Panc1 (cell line): ENCODE measurements at regions of chr1 and their contacts with region 1.

Region 1: DNA sequence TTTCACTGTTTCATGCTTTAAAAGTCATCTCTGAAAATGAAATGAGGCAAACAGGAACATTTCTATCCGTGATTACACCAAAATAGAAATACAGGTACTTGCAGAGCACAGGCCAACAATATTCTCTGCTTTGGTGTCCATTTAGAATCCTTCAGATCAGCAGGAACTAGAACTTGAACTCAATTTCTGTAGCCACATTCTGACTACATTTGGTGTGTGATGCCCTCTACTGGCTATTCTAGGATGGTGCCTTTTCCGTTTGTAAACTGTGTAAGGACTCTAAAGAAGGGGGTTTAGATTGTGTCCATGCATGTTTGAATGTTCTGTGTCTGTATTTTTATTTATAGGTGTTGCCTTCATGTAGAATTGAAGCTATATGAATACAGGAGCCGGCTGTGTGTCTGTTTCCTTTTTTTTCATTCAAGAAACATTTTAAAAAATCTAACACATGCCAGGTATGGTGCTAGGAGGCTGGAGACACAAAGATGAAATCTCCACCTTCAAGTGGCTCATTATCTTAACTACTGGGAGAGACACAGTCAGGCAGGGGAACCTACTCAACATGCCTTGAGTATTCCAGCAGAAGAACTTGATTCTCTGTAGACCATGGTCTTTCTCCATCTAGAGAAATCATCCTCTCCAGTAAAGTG is 7.6 kb upstream of the ZNF326 start:
- DNase-seq: peak; percentile 78
- ATAC-seq: peak; percentile 95
- H3K4me3 ChIP-seq: no peak overlapping the region
- H3K27ac ChIP-seq: no peak overlapping the region
- H3K4me1 ChIP-seq: no peaks in the 10 kb centered on the region
- H3K27me3 ChIP-seq: no peaks in the 10 kb centered on the region
- CTCF ChIP-seq: peak; percentile 83

Region 2: DNA sequence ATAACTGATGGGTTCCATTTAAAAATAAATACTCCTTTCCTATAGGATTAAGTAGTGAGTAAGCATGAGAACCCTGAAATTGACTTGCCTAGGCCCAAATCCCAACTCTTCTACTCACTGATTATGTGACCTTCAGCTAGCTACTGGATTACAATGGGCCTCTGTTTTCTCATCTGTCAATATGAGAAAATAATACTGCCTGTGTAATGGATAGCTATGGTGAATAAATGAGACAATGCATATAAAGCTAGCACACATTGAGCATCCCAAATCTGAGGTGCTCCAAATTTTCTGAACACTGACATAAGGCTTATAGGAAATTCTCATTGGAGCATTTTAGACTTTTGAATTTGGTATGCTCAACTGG is 359.7 kb before region 1 on chr1:
- CTCF ChIA-PET with region 1: no interaction called
- POLR2A ChIA-PET with region 1: no interaction called
- in situ Hi-C with region 1: no loop called
- intact Hi-C with region 1: loop called (anchors 5 kb)
- DNase-seq: no peak
- ATAC-seq: no peak
- H3K4me3 ChIP-seq: no peak overlapping the region
- H3K27ac ChIP-seq: no peak overlapping the region
- H3K4me1 ChIP-seq: peaks cover 3% of the 10 kb centered on the region; the same call in 1 of the 2 replicates
- H3K27me3 ChIP-seq: no peaks in the 10 kb centered on the region
- CTCF ChIP-seq: no peak

Region 3: DNA sequence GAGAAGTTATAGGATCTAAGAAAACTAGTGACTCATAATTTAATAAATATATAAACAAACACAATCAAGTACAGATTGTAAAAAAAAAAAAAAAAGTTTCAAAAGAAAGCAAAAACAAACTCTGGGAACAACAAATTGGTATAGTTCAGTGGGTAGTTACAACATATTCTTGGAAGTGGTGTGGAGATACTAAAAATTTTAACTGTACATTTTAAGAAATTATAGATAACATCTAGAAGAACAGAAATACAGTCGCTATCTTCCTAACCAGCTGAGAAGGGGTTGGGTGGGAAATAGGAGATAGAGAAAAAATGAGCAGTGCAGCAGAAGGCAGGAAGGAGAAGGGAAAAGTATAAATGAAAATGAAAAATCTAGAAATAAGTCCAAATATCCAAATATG is 283.8 kb before region 1 on chr1:
- CTCF ChIA-PET with region 1: interaction called, 10 read pairs
- POLR2A ChIA-PET with region 1: no interaction called
- in situ Hi-C with region 1: no loop called
- intact Hi-C with region 1: no loop called
- DNase-seq: no peak
- ATAC-seq: no peak
- H3K4me3 ChIP-seq: no peak overlapping the region
- H3K27ac ChIP-seq: no peak overlapping the region
- H3K4me1 ChIP-seq: no peaks in the 10 kb centered on the region; the same call in 1 of the 2 replicates
- H3K27me3 ChIP-seq: no peaks in the 10 kb centered on the region
- CTCF ChIP-seq: no peak

Region 4: DNA sequence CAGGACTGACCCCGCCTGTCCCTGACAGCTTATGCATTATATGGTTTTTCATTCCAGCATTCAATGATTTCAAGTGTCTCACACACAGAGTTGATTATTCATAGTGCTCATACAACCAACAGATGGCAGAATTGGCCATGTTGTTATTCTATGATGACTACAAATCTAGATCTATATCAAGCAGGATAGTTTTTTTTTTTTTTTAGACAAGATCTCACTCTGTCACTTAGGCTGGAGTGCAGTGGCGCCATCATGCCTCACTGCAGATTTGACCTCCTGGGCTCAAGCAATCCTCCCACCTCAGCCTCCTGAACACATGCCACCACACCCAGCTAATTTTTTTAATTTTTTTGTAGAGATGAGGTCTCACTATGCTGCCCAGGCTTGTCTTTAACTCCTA is 206.6 kb before region 1 on chr1:
- CTCF ChIA-PET with region 1: no interaction called
- POLR2A ChIA-PET with region 1: no interaction called
- in situ Hi-C with region 1: no loop called
- intact Hi-C with region 1: loop called (anchors 5 kb)
- DNase-seq: peak; percentile 48
- ATAC-seq: peak; percentile 84
- H3K4me3 ChIP-seq: no peak overlapping the region
- H3K27ac ChIP-seq: no peak overlapping the region
- H3K4me1 ChIP-seq: no peaks in the 10 kb centered on the region
- H3K27me3 ChIP-seq: peaks cover 2% of the 10 kb centered on the region; the same call in 1 of the 2 replicates
- CTCF ChIP-seq: peak; percentile 67

Region 5: GRCh38 chr1:89804642-89805237 is 182.6 kb before region 1 on chr1:
- CTCF ChIA-PET with region 1: interaction called, 6 read pairs
- POLR2A ChIA-PET with region 1: no interaction called
- in situ Hi-C with region 1: no loop called
- intact Hi-C with region 1: loop called (anchors 1 kb)
- DNase-seq: peak; percentile 88
- ATAC-seq: peak; percentile 95
- H3K4me3 ChIP-seq: no peak overlapping the region
- H3K27ac ChIP-seq: no peak overlapping the region
- H3K4me1 ChIP-seq: no peaks in the 10 kb centered on the region
- H3K27me3 ChIP-seq: peaks cover 4% of the 10 kb centered on the region; the same call in 1 of the 2 replicates
- CTCF ChIP-seq: peak; percentile 98

Region 6: GRCh38 chr1:89843281-89844121 is 143.8 kb before region 1 on chr1:
- CTCF ChIA-PET with region 1: interaction called, 3 read pairs
- POLR2A ChIA-PET with region 1: no interaction called
- in situ Hi-C with region 1: no loop called
- intact Hi-C with region 1: loop called (anchors 5 kb)
- DNase-seq: no peak
- ATAC-seq: peak; percentile 98
- H3K4me3 ChIP-seq: peak overlapping the region; percentile 65 to 79
- H3K27ac ChIP-seq: peak overlapping the region; percentile 85
- H3K4me1 ChIP-seq: peaks cover 18% of the 10 kb centered on the region
- H3K27me3 ChIP-seq: no peaks in the 10 kb centered on the region
- CTCF ChIP-seq: peak; percentile 95

Region 7: GRCh38 chr1:90133133-90133532 is 145.8 kb after region 1 on chr1:
- CTCF ChIA-PET with region 1: no interaction called
- POLR2A ChIA-PET with region 1: no interaction called
- in situ Hi-C with region 1: no loop called
- intact Hi-C with region 1: no loop called
- DNase-seq: no peak
- ATAC-seq: peak; percentile 89
- H3K4me3 ChIP-seq: no peak overlapping the region
- H3K27ac ChIP-seq: no peak overlapping the region
- H3K4me1 ChIP-seq: no peaks in the 10 kb centered on the region
- H3K27me3 ChIP-seq: peaks cover 7% of the 10 kb centered on the region; the same call in 1 of the 2 replicates
- CTCF ChIP-seq: peak; percentile 78